ENCODE measurements at regions of chr6 and their contacts with region 1.

Region 1: DNA sequence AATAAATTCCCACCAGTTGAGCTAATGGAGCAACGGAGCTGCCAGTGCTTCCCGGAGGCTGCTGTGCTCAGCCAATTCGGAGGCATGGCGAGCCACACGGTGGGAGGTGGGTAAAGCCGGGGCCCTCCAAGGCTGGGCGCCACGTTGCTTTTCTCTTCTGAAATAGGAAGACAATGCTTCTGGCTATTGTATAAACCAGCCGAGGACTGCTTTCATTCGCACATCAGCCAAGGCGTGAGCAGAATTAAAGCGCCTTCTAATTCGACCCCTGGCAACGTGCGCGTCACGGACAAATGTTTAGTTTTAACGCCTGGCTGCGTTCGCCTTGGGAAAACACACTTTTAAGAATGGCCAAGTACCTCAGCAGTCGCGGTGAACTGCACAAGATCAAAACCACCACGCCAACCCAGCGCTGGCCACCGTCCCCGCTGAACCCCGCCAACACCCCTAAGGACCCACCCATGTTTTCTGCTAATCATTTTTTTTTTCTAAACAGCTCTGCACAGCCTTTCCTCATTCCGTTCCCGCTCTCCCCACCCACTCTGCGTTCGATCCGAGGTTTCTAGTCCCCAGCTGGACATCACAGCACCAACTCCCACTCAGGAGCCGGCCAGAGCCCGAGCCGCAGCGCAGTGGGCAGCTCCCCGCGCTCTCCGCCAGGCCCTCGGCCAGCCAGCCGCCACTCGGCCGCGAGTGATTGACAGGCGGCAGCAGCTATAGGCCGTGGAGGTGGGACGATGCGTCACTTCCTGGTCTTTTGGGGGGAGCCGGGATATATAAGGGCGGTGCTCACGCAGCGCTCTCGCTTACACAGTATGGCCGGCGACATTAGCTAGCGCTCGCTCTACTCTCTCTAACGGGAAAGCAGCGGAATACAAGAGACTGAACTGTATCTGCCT is at the start of gene AMD1:
- DNase-seq: peak in 1 of 2 donors; percentile 98
- H3K4me3 ChIP-seq: peak within 1 kb of the TSS; percentile 64 to 90
- H3K27ac ChIP-seq: peak within 1 kb of the TSS; percentile 93
- H3K4me1 ChIP-seq: peaks cover 33% of the 10 kb centered on the region
- H3K27me3 ChIP-seq: no peaks in the 10 kb centered on the region
- CTCF ChIP-seq: no peak
- POLR2A ChIP-seq: peak; percentile 29 to 96
- total RNA-seq, gene AMD1: 58.2 TPM

Region 2: DNA sequence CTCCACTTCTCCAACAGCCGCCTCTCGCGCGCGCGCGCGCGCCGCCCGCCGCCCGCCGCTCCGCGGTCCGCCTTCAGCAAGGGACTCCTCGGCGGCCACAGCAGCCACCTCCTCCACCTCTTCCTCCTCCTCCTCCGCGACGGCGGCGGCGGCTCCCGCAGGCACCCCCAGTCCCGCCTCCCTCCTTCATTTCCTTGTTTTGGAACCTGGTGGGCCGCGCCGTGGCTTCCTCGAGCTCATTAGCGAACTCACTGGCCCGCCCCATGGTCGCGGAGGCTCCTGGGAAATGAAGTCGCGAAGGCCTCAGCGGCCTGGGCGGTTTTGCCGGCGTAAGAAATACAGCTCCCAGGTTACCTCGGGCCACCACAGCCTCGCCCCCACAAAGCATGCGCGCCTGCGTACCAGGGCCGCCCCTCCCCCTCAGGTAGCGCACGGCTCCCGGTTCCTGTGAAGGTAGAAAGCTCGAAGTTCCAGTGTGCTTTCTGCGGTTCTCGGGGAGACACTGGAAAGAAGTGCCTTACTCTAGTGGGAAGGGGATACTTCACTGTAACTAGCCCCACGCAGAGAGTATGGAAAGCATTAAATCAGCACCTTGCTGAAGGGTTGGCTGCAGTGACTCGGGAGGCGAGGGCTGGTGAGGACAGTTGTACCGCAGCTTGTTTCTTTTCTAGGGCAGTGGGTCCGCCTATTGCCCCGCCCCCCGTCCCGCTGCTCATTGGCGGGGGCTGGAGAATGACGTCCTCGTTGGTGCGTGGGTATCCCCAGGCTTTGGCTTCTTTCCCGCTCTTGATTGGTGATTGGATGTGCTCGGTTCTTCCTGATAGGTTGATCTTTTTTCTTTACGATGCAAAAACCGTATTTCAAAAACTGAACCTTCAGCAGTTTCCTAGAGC is 58.8 kb before region 1 on chr6 and contains the start of gene CDK19:
- intact Hi-C with region 1: loop called (anchors 2 kb)
- DNase-seq: peak; percentile 98
- H3K4me3 ChIP-seq: peak within 1 kb of the TSS; percentile 75 to 79
- H3K27ac ChIP-seq: peak within 1 kb of the TSS; percentile 93
- H3K4me1 ChIP-seq: peaks cover 26% of the 10 kb centered on the region
- H3K27me3 ChIP-seq: no peaks in the 10 kb centered on the region
- CTCF ChIP-seq: no peak
- POLR2A ChIP-seq: peak in 1 of 2 donors; percentile 67
- total RNA-seq, gene CDK19: 10.6 TPM